ENCODE measurements at regions of chr11 and their contacts with region 1.

Region 1: DNA sequence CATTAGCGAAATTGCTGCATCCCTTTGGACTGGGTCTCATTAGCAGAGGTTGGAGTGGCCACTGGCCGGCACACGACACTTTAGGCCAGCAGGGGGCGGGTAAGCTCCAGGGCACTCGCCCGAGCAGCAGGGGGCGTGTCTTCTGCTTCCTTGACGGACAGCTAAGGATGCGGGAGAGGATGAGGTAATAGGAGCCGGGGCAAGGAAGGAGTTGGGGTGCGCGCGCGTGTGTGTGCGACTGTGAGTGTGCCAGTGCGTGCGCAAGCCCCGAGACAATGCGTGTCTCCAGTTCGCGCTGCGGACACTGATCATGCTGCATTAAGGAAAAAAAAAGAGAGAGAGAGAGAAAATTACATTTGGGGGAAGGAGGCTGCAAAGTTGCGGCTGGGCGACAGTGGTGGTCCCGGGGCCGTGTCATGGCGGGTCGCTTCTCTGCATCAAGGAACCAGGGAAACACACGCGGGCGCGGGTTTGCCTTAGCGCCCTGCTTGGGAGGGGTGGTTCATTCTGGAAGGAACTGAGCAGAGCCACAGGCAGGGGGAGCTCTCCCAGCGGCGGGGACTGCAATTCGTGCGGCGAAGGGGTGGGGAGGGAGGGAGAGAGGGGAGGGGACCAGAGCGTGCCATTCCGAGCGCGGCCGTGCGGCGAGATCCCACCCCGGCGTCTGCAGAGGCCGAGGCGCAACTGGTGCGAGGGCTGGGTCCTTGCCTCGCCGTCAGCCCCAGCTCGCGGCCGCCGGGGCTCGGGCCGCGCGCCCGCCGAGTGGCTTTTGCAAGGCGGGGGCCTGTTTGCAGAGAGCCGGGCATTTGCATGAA is at the start of gene DTX4:
- DNase-seq: peak; percentile 87 to 95 (median 92)
- ATAC-seq: peak; percentile 98
- H3K4me3 ChIP-seq: peak within 1 kb of the TSS; percentile 39
- H3K27ac ChIP-seq: peak within 1 kb of the TSS; percentile 54; the same call in 1 of the 3 replicates
- H3K4me1 ChIP-seq: peaks cover 0 to 20% of the 10 kb centered on the region in 2 experiments; a peak in 3 of 5 replicates
- H3K27me3 ChIP-seq: peaks cover 14 to 32% of the 10 kb centered on the region in 2 experiments
- CTCF ChIP-seq: peak; percentile 90 to 98 (median 95)
- EP300 ChIP-seq: no peak
- POLR2A ChIP-seq: no peak
- RAD21 ChIP-seq: peak; percentile 79 to 84
- polyA plus RNA-seq, gene DTX4: 0.03 TPM in 1 of 2 experiments, not detected in the other

Region 2: DNA sequence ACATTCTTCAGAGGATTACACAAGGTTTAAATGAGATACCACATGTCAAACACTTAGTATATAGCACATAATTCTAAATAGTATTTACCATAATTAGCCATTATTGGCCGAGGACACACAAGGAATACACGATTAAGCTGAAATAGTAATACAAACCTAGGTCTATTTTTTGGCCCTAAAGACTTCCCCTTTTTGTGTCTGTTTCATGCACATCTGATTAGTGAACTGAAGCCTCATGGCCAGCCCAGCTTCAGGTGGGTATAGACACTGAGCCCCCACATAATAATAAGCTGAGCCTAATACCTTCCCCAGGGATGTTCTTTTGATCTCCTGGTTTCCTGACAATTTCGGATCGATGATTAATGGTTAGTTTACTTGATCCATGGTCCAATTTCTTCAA is 83.6 kb before region 1 on chr11:
- CTCF ChIA-PET with region 1: no interaction called
- POLR2A ChIA-PET with region 1: no interaction called
- in situ Hi-C with region 1: no loop called
- intact Hi-C with region 1: no loop called
- DNase-seq: no peak
- ATAC-seq: no peak
- H3K4me3 ChIP-seq: no peak overlapping the region
- H3K27ac ChIP-seq: no peak overlapping the region
- H3K4me1 ChIP-seq: no peaks in the 10 kb centered on the region
- H3K27me3 ChIP-seq: no peaks in the 10 kb centered on the region
- CTCF ChIP-seq: no peak
- EP300 ChIP-seq: no peak
- POLR2A ChIP-seq: no peak
- RAD21 ChIP-seq: no peak

Region 3: GRCh38 chr11:59135648-59136461 is 35.9 kb before region 1 on chr11:
- CTCF ChIA-PET with region 1: no interaction called
- POLR2A ChIA-PET with region 1: no interaction called
- in situ Hi-C with region 1: no loop called
- intact Hi-C with region 1: no loop called
- DNase-seq: peak; percentile 80 to 83 (median 81)
- ATAC-seq: peak; percentile 100
- H3K4me3 ChIP-seq: peak overlapping the region; percentile 9; the same call in 1 of the 2 replicates
- H3K27ac ChIP-seq: no peak overlapping the region
- H3K4me1 ChIP-seq: peaks cover 2 to 3% of the 10 kb centered on the region in 2 experiments; a peak in 2 of 5 replicates
- H3K27me3 ChIP-seq: no peaks in the 10 kb centered on the region
- CTCF ChIP-seq: peak; percentile 93 to 97 (median 93)
- EP300 ChIP-seq: no peak
- POLR2A ChIP-seq: no peak
- RAD21 ChIP-seq: peak; percentile 83 to 88

Region 4: GRCh38 chr11:59207988-59208451 is 36.3 kb after region 1 on chr11:
- CTCF ChIA-PET with region 1: interaction called, 36 read pairs
- POLR2A ChIA-PET with region 1: no interaction called
- in situ Hi-C with region 1: no loop called
- intact Hi-C with region 1: loop called (anchors 1 kb)
- DNase-seq: peak; percentile 30 to 56 (median 40)
- ATAC-seq: peak; percentile 82
- H3K4me3 ChIP-seq: no peak overlapping the region
- H3K27ac ChIP-seq: no peak overlapping the region
- H3K4me1 ChIP-seq: no peaks in the 10 kb centered on the region
- H3K27me3 ChIP-seq: peaks cover 4 to 37% of the 10 kb centered on the region in 2 experiments; a peak in 3 of 5 replicates
- CTCF ChIP-seq: peak; percentile 71 to 76 (median 71)
- EP300 ChIP-seq: no peak
- POLR2A ChIP-seq: no peak
- RAD21 ChIP-seq: peak; percentile 43 to 63

Region 5: GRCh38 chr11:59283825-59284772 is 112.4 kb after region 1 on chr11:
- CTCF ChIA-PET with region 1: interaction called, 14 read pairs
- POLR2A ChIA-PET with region 1: no interaction called
- in situ Hi-C with region 1: no loop called
- intact Hi-C with region 1: loop called (anchors 1 kb)
- DNase-seq: peak; percentile 31 to 52 (median 40)
- ATAC-seq: peak; percentile 83
- H3K4me3 ChIP-seq: no peak overlapping the region
- H3K27ac ChIP-seq: no peak overlapping the region
- H3K4me1 ChIP-seq: no peaks in the 10 kb centered on the region
- H3K27me3 ChIP-seq: no peaks in the 10 kb centered on the region
- CTCF ChIP-seq: peak; percentile 67 to 78 (median 75)
- EP300 ChIP-seq: no peak
- POLR2A ChIP-seq: no peak
- RAD21 ChIP-seq: peak; percentile 54 to 72

Region 6: DNA sequence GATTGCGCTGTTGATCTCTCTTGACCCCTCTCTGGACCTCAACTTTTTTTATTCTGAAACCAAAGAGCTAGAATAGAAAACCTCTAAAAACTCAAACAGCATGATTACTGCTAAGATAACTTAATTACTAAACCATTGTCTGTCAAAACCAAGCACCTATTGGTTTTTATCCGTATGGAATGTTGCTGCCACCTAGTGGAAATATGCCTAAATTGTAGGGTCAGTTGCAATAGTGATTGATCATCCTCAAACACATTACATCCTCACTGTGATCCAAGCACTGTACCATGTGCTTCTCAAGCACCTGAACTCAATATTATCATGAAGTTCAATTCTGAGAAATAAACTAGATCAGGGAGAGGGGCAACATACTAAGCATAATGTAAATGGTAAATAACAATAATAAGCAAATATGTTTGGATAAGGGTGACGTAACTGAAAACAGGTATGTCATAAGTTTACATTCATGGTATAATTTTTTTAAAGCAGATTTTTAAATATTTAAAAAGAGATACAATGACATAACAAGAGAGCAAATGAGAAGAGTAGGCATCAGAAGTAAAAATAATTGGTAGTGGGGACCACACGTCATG is 258.3 kb after region 1 on chr11:
- CTCF ChIA-PET with region 1: interaction called, 12 read pairs
- POLR2A ChIA-PET with region 1: no interaction called
- in situ Hi-C with region 1: loop called (anchors 10 kb)
- intact Hi-C with region 1: loop called (anchors 1 kb)
- DNase-seq: peak; percentile 56 to 68 (median 66)
- ATAC-seq: peak; percentile 86
- H3K4me3 ChIP-seq: no peak overlapping the region
- H3K27ac ChIP-seq: no peak overlapping the region
- H3K4me1 ChIP-seq: no peaks in the 10 kb centered on the region
- H3K27me3 ChIP-seq: no peaks in the 10 kb centered on the region
- CTCF ChIP-seq: peak; percentile 57 to 88 (median 76); a peak in 5 of 6 replicates
- EP300 ChIP-seq: no peak
- POLR2A ChIP-seq: no peak
- RAD21 ChIP-seq: peak; percentile 64 to 81

Region 7: GRCh38 chr11:59802639-59803176 is 631.0 kb after region 1 on chr11:
- CTCF ChIA-PET with region 1: interaction called, 8 read pairs
- POLR2A ChIA-PET with region 1: no interaction called
- in situ Hi-C with region 1: no loop called
- intact Hi-C with region 1: loop called (anchors 5 kb)
- DNase-seq: peak; percentile 39 to 74 (median 54)
- ATAC-seq: peak; percentile 61
- H3K4me3 ChIP-seq: no peak overlapping the region
- H3K27ac ChIP-seq: no peak overlapping the region
- H3K4me1 ChIP-seq: no peaks in the 10 kb centered on the region; a peak in 1 of 5 replicates
- H3K27me3 ChIP-seq: no peaks in the 10 kb centered on the region
- CTCF ChIP-seq: peak; percentile 63 to 88 (median 63)
- EP300 ChIP-seq: no peak
- POLR2A ChIP-seq: no peak
- RAD21 ChIP-seq: peak; percentile 85 to 86

Measured in K562 (cell line).